Esophagus muscularis mucosa (tissue), 4 donors: ENCODE measurements at regions of chr15 and their contacts with region 1.

Region 1: GRCh38 chr15:71443538-71443937 is 328.3 kb downstream of the THSD4 start:
- DNase-seq: no peak
- H3K4me3 ChIP-seq: no peak overlapping the region
- H3K27ac ChIP-seq: no peak overlapping the region
- H3K4me1 ChIP-seq: peaks cover 3 to 12% (median 7%) of the 10 kb centered on the region in 4 donors
- H3K27me3 ChIP-seq: no peaks in the 10 kb centered on the region
- CTCF ChIP-seq: peak; percentile 83 to 93 (median 88)
- EP300 ChIP-seq: no peak
- POLR2A ChIP-seq: no peak

Region 2: GRCh38 chr15:71011503-71012155 is 431.9 kb before region 1 on chr15:
- intact Hi-C with region 1: loop called (anchors 5 kb)
- DNase-seq: no peak
- H3K4me3 ChIP-seq: no peak overlapping the region
- H3K27ac ChIP-seq: no peak overlapping the region
- H3K4me1 ChIP-seq: no peaks in the 10 kb centered on the region
- H3K27me3 ChIP-seq: no peaks in the 10 kb centered on the region
- CTCF ChIP-seq: peak; percentile 55 to 73 (median 61)
- EP300 ChIP-seq: no peak
- POLR2A ChIP-seq: no peak

Region 3: DNA sequence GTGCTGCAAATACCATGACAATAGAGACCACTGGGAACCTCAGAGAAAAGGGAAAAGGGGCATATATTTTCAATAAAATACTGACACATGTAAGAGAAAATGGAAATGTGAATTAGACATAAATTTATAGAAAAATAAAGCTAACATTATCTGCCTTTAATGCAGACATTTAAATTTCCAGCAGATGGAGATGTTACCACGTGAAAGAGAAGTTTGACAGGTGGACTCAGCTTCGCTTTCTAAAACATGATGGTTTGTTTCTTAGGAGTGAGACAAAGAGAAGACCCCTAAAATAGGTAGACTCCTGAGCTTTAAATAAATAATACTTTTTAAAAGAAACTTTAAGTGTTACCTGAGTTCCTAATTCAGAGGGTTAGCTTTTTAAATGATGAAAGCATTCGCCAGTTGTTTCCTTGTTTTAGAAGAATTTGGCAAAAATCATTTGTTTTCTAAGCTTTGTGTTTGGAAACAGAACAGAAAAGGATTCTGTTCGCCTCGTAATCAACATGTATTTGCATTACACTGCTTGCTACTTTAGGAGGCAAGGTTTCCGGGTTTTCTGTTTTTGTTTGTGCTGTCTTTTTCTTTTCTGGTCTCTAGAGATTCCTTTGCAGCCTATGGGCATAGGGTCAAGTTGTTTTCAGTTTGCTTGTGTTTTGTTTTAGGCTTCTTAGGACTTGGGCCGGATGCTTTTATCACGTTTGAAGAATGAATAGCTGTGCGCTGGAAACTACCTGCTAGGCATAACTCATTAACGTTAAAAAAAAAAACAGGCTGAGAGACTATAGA is 56.9 kb before region 1 on chr15:
- intact Hi-C with region 1: loop called (anchors 2 kb)
- DNase-seq: no peak
- H3K4me3 ChIP-seq: no peak overlapping the region
- H3K27ac ChIP-seq: no peak overlapping the region
- H3K4me1 ChIP-seq: peaks cover 27 to 33% (median 32%) of the 10 kb centered on the region in 4 donors
- H3K27me3 ChIP-seq: no peaks in the 10 kb centered on the region
- CTCF ChIP-seq: peak; percentile 47 to 66 (median 58)
- EP300 ChIP-seq: no peak
- POLR2A ChIP-seq: no peak